ENCODE measurements at regions of chr19 and their contacts with region 1.

Region 1: GRCh38 chr19:21505459-21506451 is at the start of gene ZNF429:
- DNase-seq: peak; percentile 98
- H3K4me3 ChIP-seq: peak within 1 kb of the TSS; percentile 70 to 88 (median 80)
- H3K27ac ChIP-seq: peak within 1 kb of the TSS; percentile 90 to 94 (median 92)
- H3K4me1 ChIP-seq: peaks cover 16 to 37% (median 27%) of the 10 kb centered on the region in 4 donors
- H3K27me3 ChIP-seq: no peaks in the 10 kb centered on the region
- CTCF ChIP-seq: peak in 1 of 3 experiments; percentile 19
- EP300 ChIP-seq: no peak
- POLR2A ChIP-seq: peak; percentile 52
- total RNA-seq, gene ZNF429: 7.8 to 15.0 (median 11.4) TPM

Region 2: GRCh38 chr19:21568816-21569493 is 63.2 kb after region 1 on chr19:
- intact Hi-C with region 1: no loop called
- DNase-seq: peak; percentile 96
- H3K4me3 ChIP-seq: peak overlapping the region; percentile 27 to 62 (median 56)
- H3K27ac ChIP-seq: peak overlapping the region in 2 of 4 donors; percentile 72 to 74
- H3K4me1 ChIP-seq: peaks cover 0 to 11% (median 3%) of the 10 kb centered on the region in 4 donors
- H3K27me3 ChIP-seq: no peaks in the 10 kb centered on the region
- CTCF ChIP-seq: no peak
- EP300 ChIP-seq: no peak
- POLR2A ChIP-seq: no peak

Region 3: GRCh38 chr19:21604351-21604926 is 98.7 kb after region 1 on chr19:
- intact Hi-C with region 1: loop called (anchors 10 kb)
- DNase-seq: no peak
- H3K4me3 ChIP-seq: peak overlapping the region; percentile 50 to 61 (median 58)
- H3K27ac ChIP-seq: peak overlapping the region; percentile 74 to 78 (median 74)
- H3K4me1 ChIP-seq: peaks cover 16 to 36% (median 33%) of the 10 kb centered on the region in 4 donors
- H3K27me3 ChIP-seq: no peaks in the 10 kb centered on the region
- CTCF ChIP-seq: no peak
- EP300 ChIP-seq: no peak
- POLR2A ChIP-seq: no peak

Region 4: DNA sequence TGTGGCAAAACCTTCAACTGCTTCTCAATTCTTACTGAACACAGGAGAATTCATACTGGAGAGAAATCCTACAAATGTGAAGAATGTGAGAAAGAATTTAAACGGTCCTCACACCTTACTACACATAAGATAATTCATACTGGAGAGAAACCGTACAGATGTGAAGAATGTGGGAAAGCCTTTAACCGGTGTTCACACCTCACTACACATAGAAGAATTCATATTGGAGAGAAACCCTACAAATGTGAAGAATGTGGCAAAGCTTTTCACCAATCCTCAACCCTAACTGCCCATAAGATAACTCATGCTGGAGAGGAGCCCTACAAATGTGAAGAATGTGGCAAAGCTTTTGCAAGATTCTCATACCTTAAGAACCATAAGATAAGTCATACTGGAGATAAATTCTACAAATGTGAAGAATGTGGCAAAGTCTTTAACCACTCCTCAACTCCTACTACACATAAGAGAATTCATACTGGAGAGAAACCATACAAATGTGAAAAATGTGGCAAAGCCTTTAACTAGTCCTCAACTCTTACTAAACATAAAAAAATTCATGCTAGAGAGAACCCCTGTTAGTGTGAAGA is 149.9 kb after region 1 on chr19:
- intact Hi-C with region 1: no loop called
- DNase-seq: no peak
- H3K4me3 ChIP-seq: no peak overlapping the region
- H3K27ac ChIP-seq: no peak overlapping the region
- H3K4me1 ChIP-seq: no peaks in the 10 kb centered on the region
- H3K27me3 ChIP-seq: no peaks in the 10 kb centered on the region
- CTCF ChIP-seq: no peak
- EP300 ChIP-seq: no peak
- POLR2A ChIP-seq: no peak

Region 5: DNA sequence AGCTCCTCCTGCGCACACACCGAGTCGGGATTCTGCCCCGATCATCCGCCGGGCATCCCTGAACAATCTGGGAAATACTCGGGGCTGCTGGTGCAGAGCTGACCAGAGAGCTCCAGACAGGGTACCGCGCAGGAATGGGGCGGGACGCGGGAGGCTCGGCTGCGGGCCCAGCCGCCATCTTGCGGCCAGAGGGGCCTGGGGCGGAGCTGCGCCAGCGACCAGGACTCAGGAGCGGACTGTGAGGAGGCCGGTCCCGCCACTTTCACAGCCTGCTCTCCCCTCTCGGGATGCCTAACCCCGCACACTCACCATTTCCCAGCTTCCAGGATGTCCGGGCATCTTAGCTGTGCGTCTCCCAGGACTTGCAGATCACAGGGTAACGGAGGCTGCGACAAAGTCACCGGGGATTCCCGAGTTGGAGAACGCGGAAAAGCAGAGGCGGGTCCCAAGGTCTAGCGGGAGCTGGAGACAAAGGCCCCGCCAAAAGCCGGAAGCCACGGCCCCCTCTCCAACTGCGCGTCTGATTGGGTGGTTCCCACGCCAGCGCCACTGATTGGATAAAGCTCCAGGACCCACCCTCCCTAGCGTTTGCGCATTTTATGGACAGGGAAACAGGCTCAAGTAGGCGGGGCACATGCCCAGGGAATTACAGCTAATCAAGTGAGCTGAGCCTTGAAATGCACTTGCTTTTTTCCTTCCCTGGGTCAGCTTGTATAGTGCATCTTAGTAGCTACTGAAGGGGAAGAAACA is 346.0 kb after region 1 on chr19:
- intact Hi-C with region 1: loop called (anchors 10 kb)
- DNase-seq: peak; percentile 98
- H3K4me3 ChIP-seq: peak overlapping the region; percentile 77 to 88 (median 85)
- H3K27ac ChIP-seq: peak overlapping the region; percentile 83 to 93 (median 88)
- H3K4me1 ChIP-seq: peaks cover 10 to 22% (median 16%) of the 10 kb centered on the region in 4 donors
- H3K27me3 ChIP-seq: peaks cover 0 to under 1% (median 0%) of the 10 kb centered on the region in 4 donors
- CTCF ChIP-seq: peak in 1 of 3 experiments; percentile 18
- EP300 ChIP-seq: no peak
- POLR2A ChIP-seq: no peak

Measured in esophagus muscularis mucosa (tissue), 4 donors.